ENCODE measurements at regions of chr22 and their contacts with region 1.

Region 1: GRCh38 chr22:17411213-17411612 is 42.0 kb downstream of the CECR2 start:
- DNase-seq: no peak
- H3K4me3 ChIP-seq: no peak overlapping the region
- H3K27ac ChIP-seq: no peak overlapping the region
- H3K4me1 ChIP-seq: no peaks in the 10 kb centered on the region
- H3K27me3 ChIP-seq: no peaks in the 10 kb centered on the region
- CTCF ChIP-seq: no peak

Region 2: DNA sequence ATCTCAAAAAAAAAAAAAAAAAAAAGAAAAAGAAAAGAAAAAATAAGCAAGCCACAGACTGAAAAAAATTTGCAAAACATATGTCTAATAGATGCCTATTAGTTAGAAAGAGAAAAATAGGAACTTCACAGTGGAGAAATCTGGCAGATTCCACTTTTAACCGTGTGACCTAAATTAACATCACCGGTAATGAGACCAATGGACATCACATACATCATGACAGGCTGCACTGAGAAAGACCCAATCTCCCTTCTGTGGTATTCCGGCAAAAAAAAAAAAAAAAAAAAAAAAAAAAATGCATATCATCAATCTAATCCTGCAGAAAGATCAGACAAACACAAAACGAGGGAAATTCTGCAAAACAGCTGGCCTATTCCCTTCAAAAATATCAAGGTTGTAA is 88.7 kb before region 1 on chr22:
- CTCF ChIA-PET with region 1: no interaction called
- dilution Hi-C with region 1: no loop called
- in situ Hi-C with region 1: no loop called
- intact Hi-C with region 1: no loop called
- DNase-seq: no peak
- H3K4me3 ChIP-seq: no peak overlapping the region
- H3K27ac ChIP-seq: no peak overlapping the region
- H3K4me1 ChIP-seq: no peaks in the 10 kb centered on the region
- H3K27me3 ChIP-seq: no peaks in the 10 kb centered on the region
- CTCF ChIP-seq: no peak

Region 3: GRCh38 chr22:17359501-17359900 is 51.7 kb before region 1 on chr22:
- CTCF ChIA-PET with region 1: no interaction called
- dilution Hi-C with region 1: no loop called
- in situ Hi-C with region 1: loop called in 1 of 2 experiments (anchors 10 kb)
- intact Hi-C with region 1: no loop called
- DNase-seq: no peak
- H3K4me3 ChIP-seq: no peak overlapping the region
- H3K27ac ChIP-seq: no peak overlapping the region
- H3K4me1 ChIP-seq: no peaks in the 10 kb centered on the region
- H3K27me3 ChIP-seq: no peaks in the 10 kb centered on the region
- CTCF ChIP-seq: no peak

Region 4: DNA sequence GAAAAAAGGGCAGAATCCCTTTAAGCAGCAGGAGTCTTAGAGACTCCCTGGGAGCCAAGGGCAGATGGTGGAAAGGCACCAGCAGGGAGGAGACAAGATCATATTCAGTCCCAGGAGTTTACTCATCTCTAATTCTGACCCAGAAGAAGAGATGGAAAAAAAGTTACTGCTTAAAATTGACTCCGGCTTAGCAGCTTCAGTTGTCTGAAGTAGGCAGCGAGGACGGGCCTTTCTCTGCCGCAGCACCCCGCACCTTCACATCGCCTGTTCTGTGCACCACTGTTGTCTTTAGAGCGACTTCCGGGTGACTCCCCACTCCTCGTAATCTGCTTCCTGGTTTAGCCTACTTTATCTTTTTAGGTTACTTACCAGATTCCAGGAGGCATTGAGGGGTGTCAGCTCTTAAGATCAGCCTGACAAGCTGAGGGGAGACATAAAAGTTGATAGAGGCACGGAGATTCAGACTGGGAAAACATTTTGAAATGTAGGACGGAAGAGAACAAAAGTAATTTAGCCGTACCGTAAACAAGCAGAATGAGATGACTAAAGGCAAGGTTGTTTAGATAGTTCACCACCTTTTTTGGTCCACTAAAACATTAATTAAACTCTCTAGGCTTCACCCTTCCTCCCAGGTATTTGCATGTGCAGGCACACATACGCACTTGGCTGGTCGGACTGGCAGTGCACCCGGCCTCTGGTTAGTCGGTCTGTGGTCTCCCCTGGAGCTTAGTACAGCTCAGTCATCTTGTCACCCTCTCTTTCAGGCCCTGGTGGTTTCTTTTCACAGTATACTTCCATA is 32.4 kb after region 1 on chr22:
- CTCF ChIA-PET with region 1: no interaction called
- dilution Hi-C with region 1: no loop called
- in situ Hi-C with region 1: no loop called
- intact Hi-C with region 1: no loop called
- DNase-seq: no peak
- H3K4me3 ChIP-seq: no peak overlapping the region
- H3K27ac ChIP-seq: no peak overlapping the region
- H3K4me1 ChIP-seq: no peaks in the 10 kb centered on the region
- H3K27me3 ChIP-seq: no peaks in the 10 kb centered on the region
- CTCF ChIP-seq: no peak

Region 5: GRCh38 chr22:17830043-17830961 is 419.1 kb after region 1 on chr22:
- CTCF ChIA-PET with region 1: no interaction called
- dilution Hi-C with region 1: no loop called
- in situ Hi-C with region 1: no loop called
- intact Hi-C with region 1: no loop called
- DNase-seq: peak; percentile 79
- H3K4me3 ChIP-seq: no peak overlapping the region
- H3K27ac ChIP-seq: no peak overlapping the region
- H3K4me1 ChIP-seq: peaks cover 11% of the 10 kb centered on the region
- H3K27me3 ChIP-seq: no peaks in the 10 kb centered on the region
- CTCF ChIP-seq: peak; percentile 100